Spleen (tissue), 13 donors: ENCODE measurements at regions of chr15 and their contacts with region 1.

Region 1: DNA sequence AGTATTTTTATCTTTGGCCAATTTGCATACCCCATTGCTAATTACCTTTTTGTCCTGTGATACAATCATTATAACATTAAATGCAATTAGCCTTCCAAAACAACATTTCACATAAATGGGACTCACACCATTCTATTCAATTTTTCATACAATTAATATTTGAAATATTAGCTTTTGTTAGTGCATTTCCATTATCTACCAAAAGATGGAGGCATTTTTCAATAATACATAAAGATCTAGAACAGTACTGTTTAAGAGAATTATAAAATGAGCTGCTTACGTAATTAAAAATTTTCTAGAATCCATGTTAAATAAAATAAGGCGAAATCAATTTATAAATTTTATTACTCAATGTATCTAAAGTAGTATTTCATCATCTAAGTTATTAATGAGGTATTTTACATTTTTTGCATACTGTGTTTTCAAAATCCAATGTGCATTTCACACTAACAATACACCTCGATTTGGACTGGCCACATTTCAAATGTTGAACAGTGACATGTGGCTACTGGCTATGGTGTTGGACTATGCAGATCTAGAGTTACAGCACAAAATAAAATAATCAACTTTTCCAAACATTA is 74.3 kb downstream of the TJP1 start:
- DNase-seq: no peak
- H3K4me3 ChIP-seq: no peak overlapping the region
- H3K27ac ChIP-seq: no peak overlapping the region
- H3K4me1 ChIP-seq: no peaks in the 10 kb centered on the region
- H3K27me3 ChIP-seq: peaks cover 0 to 5% (median 0%) of the 10 kb centered on the region in 7 donors
- CTCF ChIP-seq: peak in 7 of 11 experiments; percentile 19 to 43 (median 33)
- POLR2A ChIP-seq: no peak

Region 2: DNA sequence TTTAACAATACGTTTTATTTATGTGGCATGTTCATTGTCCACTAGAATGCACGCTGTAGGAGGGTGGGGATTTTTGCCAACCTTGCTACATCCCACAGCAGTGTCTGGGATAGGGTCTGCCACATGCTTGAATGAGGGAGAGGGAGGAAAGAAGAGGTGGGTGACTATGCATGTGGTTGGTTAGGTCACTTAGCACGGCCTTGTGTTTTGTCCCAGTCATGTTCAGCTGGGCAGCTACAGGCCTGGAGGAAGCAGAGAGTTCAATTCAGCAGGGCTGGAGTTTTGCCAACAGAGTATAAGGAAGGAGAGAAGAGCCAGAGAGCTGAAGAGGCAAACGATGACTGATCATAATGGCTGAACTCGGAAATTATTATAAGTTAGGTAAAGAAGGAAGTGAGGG is 209.9 kb before region 1 on chr15:
- intact Hi-C with region 1: no loop called
- DNase-seq: no peak
- H3K4me3 ChIP-seq: no peak overlapping the region
- H3K27ac ChIP-seq: no peak overlapping the region
- H3K4me1 ChIP-seq: no peaks in the 10 kb centered on the region
- H3K27me3 ChIP-seq: peaks cover 0 to 7% (median 0%) of the 10 kb centered on the region in 7 donors
- CTCF ChIP-seq: no peak
- POLR2A ChIP-seq: no peak

Region 3: DNA sequence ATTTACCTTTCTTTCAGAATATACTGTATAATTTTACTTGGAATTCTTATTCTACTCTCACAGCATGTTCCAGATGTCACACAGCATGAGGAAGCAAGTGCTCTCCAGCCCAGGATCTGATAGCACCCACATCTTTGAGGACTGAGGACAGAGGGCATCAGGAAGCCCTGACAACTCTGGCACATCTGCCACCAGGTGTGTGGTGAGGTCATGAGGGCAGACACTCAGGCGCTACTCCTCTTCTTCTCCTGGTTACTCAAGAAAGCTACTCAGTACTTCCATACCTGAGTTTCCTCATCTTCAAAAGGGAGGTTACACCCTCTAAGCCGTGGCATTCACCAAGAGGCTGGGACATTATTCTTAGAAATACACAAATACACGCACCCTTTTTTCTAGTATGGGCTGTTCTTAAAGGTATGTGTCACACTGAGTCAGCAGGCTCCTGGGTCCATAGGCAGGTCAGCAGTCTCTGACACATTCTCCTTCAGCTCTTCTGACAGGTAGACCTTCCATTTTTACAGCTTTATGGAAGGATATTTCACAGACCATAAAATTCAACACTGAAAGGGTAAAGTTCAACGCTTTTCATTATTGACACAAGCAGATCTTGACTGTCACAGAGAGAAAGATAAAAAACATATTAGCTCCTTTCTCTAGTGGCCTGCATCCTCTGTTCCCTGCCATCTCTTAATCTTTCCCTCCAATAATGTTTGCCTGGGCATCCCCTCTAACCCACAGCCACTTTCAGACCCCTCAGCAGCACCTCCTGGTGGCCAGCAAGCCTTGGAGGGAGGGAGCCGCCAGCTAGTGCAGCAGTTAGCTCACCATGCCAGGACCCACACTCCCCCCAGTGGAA is 177.5 kb after region 1 on chr15:
- intact Hi-C with region 1: loop called (anchors 5 kb)
- DNase-seq: no peak
- H3K4me3 ChIP-seq: no peak overlapping the region
- H3K27ac ChIP-seq: peak overlapping the region in 1 of 8 donors; percentile 9
- H3K4me1 ChIP-seq: peaks cover 0 to 14% (median 0%) of the 10 kb centered on the region in 6 donors
- H3K27me3 ChIP-seq: peaks cover 0 to 30% (median 0%) of the 10 kb centered on the region in 7 donors
- CTCF ChIP-seq: peak; percentile 36 to 87 (median 72)
- POLR2A ChIP-seq: no peak